GM10248 (cell line): ENCODE measurements at regions of chr2 and their contacts with region 1.

Region 1: DNA sequence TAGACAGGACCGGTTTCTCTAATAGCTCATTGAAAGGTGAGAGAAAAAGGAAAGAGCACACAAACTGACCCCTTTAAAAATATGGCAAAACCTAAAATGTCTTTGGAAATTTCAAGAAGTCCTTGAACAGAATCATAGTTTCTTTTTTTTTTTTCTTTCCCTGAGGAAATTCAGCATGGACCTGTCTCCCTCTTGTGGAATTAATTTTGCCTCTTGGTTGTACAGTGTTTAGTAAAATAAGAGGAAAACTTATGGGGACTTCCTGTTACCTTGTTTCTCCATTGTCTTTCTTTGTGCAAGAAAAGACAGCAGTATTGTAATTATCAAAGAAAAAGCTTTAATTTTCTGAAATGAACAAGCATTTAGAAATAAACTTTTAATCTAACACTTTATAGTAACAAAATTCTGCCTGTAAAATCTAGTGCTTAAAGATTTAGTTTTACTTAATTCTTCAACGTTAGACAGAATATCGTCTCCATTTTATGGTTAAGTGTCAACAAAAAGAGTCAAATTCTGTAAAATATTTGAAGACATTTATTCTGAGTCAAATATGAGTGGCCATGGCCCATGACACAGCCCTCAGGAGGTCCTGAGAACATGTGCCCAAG is 176.3 kb upstream of the NABP1 start:
- DNase-seq: no peak
- CTCF ChIP-seq: no peak

Region 2: DNA sequence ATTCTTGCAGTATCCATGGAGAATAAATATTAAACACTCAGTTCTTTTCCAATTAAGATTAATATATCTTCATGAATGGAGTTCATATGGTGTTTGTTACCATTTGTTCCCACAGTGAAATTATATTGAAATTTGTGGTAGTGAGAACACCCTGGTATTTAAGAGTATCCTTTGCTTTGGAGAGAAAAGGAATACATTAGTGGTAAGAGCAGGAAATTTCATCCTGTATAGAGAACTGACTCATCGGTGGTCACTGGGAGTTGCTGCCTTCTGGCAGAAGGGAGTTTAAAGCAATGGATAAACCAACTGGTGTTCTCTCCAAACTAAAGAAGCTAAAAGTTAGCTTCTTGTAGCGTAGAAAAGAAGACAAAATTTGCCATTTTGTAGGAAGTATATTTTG is 149.1 kb before region 1 on chr2:
- CTCF ChIA-PET with region 1: no interaction called
- POLR2A ChIA-PET with region 1: no interaction called
- DNase-seq: no peak
- CTCF ChIP-seq: no peak

Region 3: DNA sequence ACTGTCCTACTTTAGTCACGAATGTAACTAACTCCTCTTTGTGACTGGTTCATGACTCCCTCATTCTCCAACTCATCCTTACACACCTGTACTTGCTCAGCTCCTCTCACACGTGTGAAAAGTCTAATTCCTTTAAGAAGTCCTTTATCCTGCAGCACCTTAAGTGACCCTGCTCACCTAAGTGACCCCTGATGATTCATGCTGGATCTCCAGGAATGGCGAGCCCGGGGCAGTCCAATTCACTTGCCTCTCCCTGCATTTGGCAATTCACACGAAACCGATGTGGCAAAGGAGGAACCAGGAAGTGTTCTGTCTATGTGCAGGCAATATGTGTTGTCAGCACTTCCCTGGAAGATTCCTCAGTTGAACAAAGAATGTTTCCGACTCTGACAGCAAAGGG is 13.5 kb before region 1 on chr2:
- CTCF ChIA-PET with region 1: interaction called, 10 read pairs
- POLR2A ChIA-PET with region 1: no interaction called
- DNase-seq: no peak
- CTCF ChIP-seq: no peak